GM10248 (cell line): ENCODE measurements at regions of chr3 and their contacts with region 1.

Region 1: GRCh38 chr3:185659942-185660921 is 74.1 kb downstream of the SENP2 start:
- DNase-seq: peak; percentile 82
- CTCF ChIP-seq: peak; percentile 98

Region 2: GRCh38 chr3:184846496-184846895 is 813.7 kb before region 1 on chr3:
- CTCF ChIA-PET with region 1: no interaction called
- POLR2A ChIA-PET with region 1: no interaction called
- DNase-seq: no peak
- CTCF ChIP-seq: no peak

Region 3: DNA sequence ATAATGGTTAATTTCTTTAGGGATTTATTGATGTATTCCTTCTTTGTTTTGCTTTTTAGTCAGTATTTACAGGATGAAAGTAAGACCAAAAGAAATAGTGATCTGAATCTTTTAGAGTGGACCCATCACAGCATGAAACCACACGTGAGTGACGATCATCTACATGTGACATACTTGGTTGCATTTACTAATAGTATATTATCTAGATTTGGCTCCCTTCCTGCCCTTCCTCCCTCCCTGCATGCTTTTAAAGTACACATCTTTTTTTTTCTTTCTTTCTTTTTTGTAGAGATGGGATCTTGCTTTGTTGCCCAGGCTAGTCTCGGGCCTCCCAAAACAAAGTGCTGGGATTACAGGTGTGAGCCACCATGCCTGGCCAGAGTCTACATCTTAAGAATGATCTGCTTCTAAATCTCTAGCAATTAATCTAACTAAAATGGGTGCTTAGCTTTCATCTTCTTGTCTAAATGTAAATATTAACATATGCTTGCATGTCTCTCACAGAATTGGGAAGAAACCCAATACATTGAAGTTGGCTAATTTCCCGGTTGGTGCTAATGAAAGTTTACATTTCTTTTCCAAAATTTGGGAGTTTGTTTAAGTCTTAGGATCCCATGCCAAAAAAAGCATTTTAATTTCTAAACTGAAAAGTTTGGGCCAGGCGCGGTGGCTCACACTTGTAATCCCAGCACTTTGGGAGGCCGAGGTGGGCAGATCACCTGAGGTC is 36.1 kb before region 1 on chr3:
- CTCF ChIA-PET with region 1: interaction called, 12 read pairs
- POLR2A ChIA-PET with region 1: no interaction called
- DNase-seq: no peak
- CTCF ChIP-seq: no peak

Region 4: GRCh38 chr3:185677146-185677829 is 17.1 kb after region 1 on chr3:
- CTCF ChIA-PET with region 1: interaction called, 81 read pairs
- POLR2A ChIA-PET with region 1: no interaction called
- DNase-seq: peak; percentile 58
- CTCF ChIP-seq: peak; percentile 57

Region 5: GRCh38 chr3:185733980-185734724 is 73.9 kb after region 1 on chr3:
- CTCF ChIA-PET with region 1: interaction called, 21 read pairs
- POLR2A ChIA-PET with region 1: no interaction called
- DNase-seq: peak; percentile 62
- CTCF ChIP-seq: peak; percentile 51

Region 6: GRCh38 chr3:185770109-185770508 is 109.9 kb after region 1 on chr3:
- CTCF ChIA-PET with region 1: interaction called, 189 read pairs
- POLR2A ChIA-PET with region 1: no interaction called
- DNase-seq: no peak
- CTCF ChIP-seq: no peak

Region 7: DNA sequence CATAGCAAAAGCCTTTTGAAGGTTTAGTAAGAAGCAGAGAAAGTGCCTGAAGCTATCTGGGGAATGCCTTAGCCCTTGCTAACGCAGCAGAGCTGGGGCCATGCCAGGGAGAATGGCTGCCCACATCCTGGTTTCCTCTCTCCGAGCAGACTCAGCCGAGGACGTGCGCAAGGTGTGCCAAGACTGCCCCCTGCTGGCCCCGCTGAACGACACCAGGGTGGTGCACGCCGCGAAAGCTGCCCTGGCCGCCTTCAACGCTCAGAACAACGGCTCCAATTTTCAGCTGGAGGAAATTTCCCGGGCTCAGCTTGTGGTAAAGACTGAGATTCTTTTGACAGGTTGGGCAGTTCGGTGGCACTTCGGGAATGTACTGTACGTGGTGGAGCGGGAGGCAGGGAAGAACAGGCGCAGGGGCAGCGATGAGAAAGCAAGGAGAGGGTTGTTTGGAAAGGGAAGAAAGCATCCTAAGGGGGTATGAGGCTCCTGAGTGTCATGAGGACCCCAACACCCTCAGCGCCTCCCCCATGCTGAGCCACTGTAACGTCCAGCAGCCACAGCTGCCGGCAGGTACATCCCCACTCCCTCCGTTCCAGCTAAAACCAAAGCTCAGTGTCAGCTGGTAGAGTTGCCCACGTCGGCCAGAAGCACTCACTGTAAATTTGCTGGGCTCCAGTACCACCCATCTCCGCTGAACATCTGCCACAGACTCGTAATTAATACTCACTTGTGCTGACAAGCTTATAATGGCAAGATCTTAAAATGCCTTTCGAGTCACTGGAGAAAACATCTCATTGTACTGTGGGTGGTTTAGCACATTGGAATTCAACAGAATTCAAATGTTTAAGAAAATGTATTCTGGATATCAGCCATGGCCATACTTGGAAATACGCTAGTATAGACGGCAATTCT is 957.1 kb after region 1 on chr3:
- CTCF ChIA-PET with region 1: interaction called, 27 read pairs
- POLR2A ChIA-PET with region 1: no interaction called
- DNase-seq: peak; percentile 91
- CTCF ChIP-seq: peak; percentile 95